ENCODE measurements at regions of chr5 and their contacts with region 1.

Region 1: DNA sequence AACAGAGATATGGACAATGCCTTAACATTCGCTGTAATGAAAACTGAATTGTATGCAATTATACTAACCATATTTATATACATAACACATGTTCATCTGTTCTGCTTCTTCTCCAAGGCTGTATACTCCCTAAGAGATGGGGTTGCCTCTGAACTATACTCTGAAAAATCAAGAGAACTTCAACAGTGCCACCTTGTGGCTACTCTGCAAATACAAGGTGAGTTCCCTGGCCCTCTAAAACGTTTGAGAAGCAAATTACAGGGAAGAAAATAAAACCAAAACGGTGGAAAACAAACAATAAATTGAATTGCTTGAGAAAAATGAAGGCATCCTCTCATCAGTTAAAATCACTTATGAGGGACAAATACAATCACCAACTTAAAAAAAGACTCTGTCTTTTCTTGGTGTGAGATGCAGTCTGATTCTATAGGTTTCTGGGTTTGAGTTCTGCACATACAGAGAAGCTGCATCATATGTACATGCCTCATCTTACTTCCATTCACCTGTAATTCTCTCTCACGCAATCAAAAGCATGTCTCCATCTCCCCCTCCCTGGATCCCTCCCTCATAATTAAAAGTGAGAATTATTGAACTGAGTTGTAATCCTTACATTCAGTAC is 98.6 kb downstream of the FBXW11 start:
- DNase-seq: peak; percentile 79
- H3K4me3 Mint-ChIP-seq: no peak overlapping the region
- H3K27ac Mint-ChIP-seq: no peak overlapping the region
- H3K4me1 Mint-ChIP-seq: peaks cover 10% of the 10 kb centered on the region
- H3K27me3 Mint-ChIP-seq: no peaks in the 10 kb centered on the region
- CTCF ChIP-seq: peak; percentile 92

Region 2: DNA sequence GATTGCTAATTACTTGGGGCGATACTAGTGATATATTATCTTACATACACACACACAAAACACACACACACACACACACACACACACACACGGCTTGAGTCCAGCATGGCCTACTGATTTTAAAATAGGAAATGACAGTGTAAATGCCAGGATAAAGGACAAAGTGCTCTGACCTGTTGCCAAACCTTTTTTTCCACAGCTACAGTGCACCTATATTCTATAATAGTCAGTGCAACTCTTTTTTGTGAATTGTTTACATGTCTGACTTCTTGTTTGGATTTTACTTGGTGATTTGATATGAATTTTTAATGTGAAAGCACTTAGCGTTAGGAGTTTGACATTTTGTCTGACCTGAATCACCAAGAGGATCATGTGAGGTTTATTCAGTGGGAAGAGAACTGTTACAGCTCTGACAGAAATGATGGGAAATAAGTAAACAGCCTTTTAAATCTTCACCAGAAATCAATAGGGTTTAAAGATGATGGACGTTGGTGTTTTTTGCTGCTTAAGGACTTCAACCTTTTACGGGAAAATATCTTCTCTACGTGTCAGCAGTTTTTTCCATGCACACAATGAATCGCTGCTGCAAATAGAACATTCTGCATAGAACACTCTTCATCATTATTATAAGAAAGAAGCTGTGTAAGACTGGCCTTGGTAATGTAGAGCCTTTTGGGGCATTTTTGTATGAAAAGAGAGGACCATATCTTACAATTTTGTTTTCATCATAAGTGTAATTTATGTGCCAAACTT is 827.5 kb before region 1 on chr5:
- CTCF ChIA-PET with region 1: no interaction called
- POLR2A ChIA-PET with region 1: no interaction called
- intact Hi-C with region 1: no loop called
- DNase-seq: no peak
- H3K4me3 Mint-ChIP-seq: no peak overlapping the region
- H3K27ac Mint-ChIP-seq: no peak overlapping the region
- H3K4me1 Mint-ChIP-seq: no peaks in the 10 kb centered on the region
- H3K27me3 Mint-ChIP-seq: no peaks in the 10 kb centered on the region
- CTCF ChIP-seq: no peak

Region 3: DNA sequence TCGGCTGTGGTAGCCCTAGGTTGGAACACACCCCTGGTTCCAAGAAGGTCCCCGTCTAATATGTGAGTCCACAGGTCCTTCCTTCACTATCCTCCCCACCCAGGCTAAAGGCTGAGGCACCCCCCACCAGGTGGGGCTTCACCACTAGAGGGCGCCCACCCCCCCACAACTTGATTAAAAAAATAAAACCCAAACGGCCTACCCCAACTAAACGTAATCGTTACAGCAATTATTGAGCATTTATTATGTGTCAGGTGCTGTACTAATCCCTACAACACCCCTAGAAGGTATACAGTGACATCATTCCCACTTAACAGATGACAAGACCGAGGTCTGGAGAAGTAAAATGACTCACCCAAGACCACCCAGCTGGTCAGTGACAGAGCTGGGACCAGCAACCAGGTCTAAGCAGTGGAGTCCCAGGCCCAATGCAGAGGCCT is 423.4 kb before region 1 on chr5:
- CTCF ChIA-PET with region 1: interaction called, 59 read pairs
- POLR2A ChIA-PET with region 1: no interaction called
- intact Hi-C with region 1: loop called (anchors 1 kb)
- DNase-seq: peak; percentile 58
- H3K4me3 Mint-ChIP-seq: no peak overlapping the region
- H3K27ac Mint-ChIP-seq: no peak overlapping the region
- H3K4me1 Mint-ChIP-seq: peaks cover 9% of the 10 kb centered on the region
- H3K27me3 Mint-ChIP-seq: peaks cover 19% of the 10 kb centered on the region
- CTCF ChIP-seq: peak; percentile 96

Region 4: GRCh38 chr5:171893290-171893886 is 14.4 kb before region 1 on chr5:
- CTCF ChIA-PET with region 1: interaction called, 19 read pairs
- POLR2A ChIA-PET with region 1: interaction called, 4 read pairs
- intact Hi-C with region 1: no loop called
- DNase-seq: peak; percentile 8
- H3K4me3 Mint-ChIP-seq: no peak overlapping the region
- H3K27ac Mint-ChIP-seq: peak overlapping the region; percentile 8
- H3K4me1 Mint-ChIP-seq: no peaks in the 10 kb centered on the region
- H3K27me3 Mint-ChIP-seq: no peaks in the 10 kb centered on the region
- CTCF ChIP-seq: no peak

Region 5: DNA sequence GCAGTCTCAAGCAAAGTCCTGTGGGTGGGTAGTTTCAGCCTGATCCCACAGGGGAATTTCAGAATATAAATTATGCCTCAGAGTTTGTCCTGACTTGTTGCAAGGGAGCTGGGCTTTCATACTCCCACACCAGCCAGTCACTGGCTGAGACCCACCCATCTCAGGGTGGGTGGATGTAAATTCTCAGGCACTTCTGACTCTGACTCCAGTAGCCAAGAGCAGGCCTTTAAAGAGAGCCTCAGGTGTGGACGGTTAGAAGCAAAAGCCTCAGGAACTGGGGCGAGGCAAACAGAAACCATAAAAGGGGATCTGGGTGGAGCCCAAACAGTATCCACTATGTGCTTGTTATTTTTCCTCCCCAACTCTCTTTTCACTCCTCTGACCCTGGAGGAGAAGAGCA is 127.2 kb after region 1 on chr5:
- CTCF ChIA-PET with region 1: interaction called, 124 read pairs
- POLR2A ChIA-PET with region 1: no interaction called
- intact Hi-C with region 1: loop called (anchors 1 kb)
- DNase-seq: no peak
- H3K4me3 Mint-ChIP-seq: no peak overlapping the region
- H3K27ac Mint-ChIP-seq: no peak overlapping the region
- H3K4me1 Mint-ChIP-seq: peaks cover 2% of the 10 kb centered on the region
- H3K27me3 Mint-ChIP-seq: no peaks in the 10 kb centered on the region
- CTCF ChIP-seq: no peak

Region 6: DNA sequence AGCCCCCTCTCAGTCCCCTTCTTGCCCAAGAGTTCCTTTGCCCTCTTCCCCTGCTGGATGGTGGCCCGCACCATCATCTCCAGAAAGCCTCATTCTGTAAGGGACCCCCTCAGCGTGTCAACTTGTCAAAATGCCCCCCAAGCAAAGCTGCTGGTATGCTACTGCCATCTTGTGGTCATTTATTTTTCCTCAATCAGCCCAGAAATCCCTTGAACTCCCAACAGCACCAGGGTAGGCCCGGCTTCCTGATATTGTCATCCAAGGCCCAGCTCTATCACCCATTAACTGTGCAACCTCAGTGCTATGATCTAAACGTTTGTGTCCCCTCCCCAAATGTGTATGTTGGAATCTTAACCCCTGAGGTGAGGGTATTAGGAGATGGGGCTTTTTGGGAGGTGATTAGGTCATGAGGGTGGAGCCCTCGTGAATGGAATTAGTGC is 151.8 kb after region 1 on chr5:
- CTCF ChIA-PET with region 1: interaction called, 118 read pairs
- POLR2A ChIA-PET with region 1: interaction called, 9 read pairs
- intact Hi-C with region 1: loop called (anchors 1 kb)
- DNase-seq: peak; percentile 30
- H3K4me3 Mint-ChIP-seq: no peak overlapping the region
- H3K27ac Mint-ChIP-seq: no peak overlapping the region
- H3K4me1 Mint-ChIP-seq: no peaks in the 10 kb centered on the region
- H3K27me3 Mint-ChIP-seq: no peaks in the 10 kb centered on the region
- CTCF ChIP-seq: peak; percentile 64

Region 7: GRCh38 chr5:172293054-172293744 is 385.4 kb after region 1 on chr5:
- CTCF ChIA-PET with region 1: interaction called, 21 read pairs
- POLR2A ChIA-PET with region 1: no interaction called
- intact Hi-C with region 1: loop called (anchors 1 kb)
- DNase-seq: peak; percentile 87
- H3K4me3 Mint-ChIP-seq: no peak overlapping the region
- H3K27ac Mint-ChIP-seq: no peak overlapping the region
- H3K4me1 Mint-ChIP-seq: peaks cover 9% of the 10 kb centered on the region
- H3K27me3 Mint-ChIP-seq: peaks cover 12% of the 10 kb centered on the region
- CTCF ChIP-seq: peak; percentile 97

Region 8: GRCh38 chr5:172315587-172316493 is 408.0 kb after region 1 on chr5:
- CTCF ChIA-PET with region 1: no interaction called
- POLR2A ChIA-PET with region 1: no interaction called
- intact Hi-C with region 1: no loop called
- DNase-seq: no peak
- H3K4me3 Mint-ChIP-seq: no peak overlapping the region
- H3K27ac Mint-ChIP-seq: peak overlapping the region; percentile 13
- H3K4me1 Mint-ChIP-seq: peaks cover 12% of the 10 kb centered on the region
- H3K27me3 Mint-ChIP-seq: no peaks in the 10 kb centered on the region
- CTCF ChIP-seq: no peak

Measured in MCF 10A (cell line).